Thyroid gland (tissue), 4 donors: ENCODE measurements at regions of chr13 and their contacts with region 1.

Region 1: GRCh38 chr13:110561344-110562035 is at the start of gene RAB20:
- DNase-seq: peak; percentile 89 to 91
- H3K4me3 ChIP-seq: peak within 1 kb of the TSS; percentile 46 to 93 (median 74)
- H3K27ac ChIP-seq: peak within 1 kb of the TSS; percentile 96 to 100 (median 98)
- H3K4me1 ChIP-seq: peaks cover 52 to 65% of the 10 kb centered on the region in 2 donors
- H3K27me3 ChIP-seq: no peaks in the 10 kb centered on the region
- CTCF ChIP-seq: no peak
- POLR2A ChIP-seq: peak; percentile 78 to 85
- total RNA-seq, gene RAB20: 21.0 to 60.5 (median 43.5) TPM

Region 2: GRCh38 chr13:110509971-110510786 is 51.3 kb before region 1 on chr13:
- intact Hi-C with region 1: loop called (anchors 10 kb)
- DNase-seq: no peak
- H3K4me3 ChIP-seq: no peak overlapping the region
- H3K27ac ChIP-seq: no peak overlapping the region
- H3K4me1 ChIP-seq: peaks cover 26% of the 10 kb centered on the region in 2 donors
- H3K27me3 ChIP-seq: no peaks in the 10 kb centered on the region
- CTCF ChIP-seq: no peak
- POLR2A ChIP-seq: no peak

Region 3: DNA sequence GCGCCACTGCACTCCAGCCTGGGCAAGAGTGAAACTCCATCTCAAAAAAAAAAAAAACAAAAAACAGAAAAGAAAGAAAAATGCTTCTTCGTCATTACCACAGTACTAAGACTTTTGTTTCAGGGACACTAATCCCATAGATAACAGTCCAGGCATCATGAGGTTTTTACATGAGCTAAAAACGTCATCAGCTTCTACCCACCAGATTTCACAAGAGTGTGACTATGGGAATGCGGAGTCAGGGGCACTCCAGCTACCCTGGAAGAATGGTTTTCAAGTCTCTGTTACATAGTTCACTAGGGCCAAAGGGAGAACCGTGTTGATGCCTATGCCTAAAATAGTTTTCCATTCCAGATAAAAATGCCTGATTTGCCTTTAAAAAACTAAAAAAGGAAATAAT is 33.1 kb before region 1 on chr13:
- intact Hi-C with region 1: loop called (anchors 2 kb)
- DNase-seq: no peak
- H3K4me3 ChIP-seq: no peak overlapping the region
- H3K27ac ChIP-seq: peak overlapping the region; percentile 46 to 92 (median 71)
- H3K4me1 ChIP-seq: peaks cover 71 to 79% of the 10 kb centered on the region in 2 donors
- H3K27me3 ChIP-seq: no peaks in the 10 kb centered on the region
- CTCF ChIP-seq: no peak
- POLR2A ChIP-seq: no peak